Activated T-helper 2 cell treated with anti-CD3 and anti-CD28 coated beads, Interferon-gamma antibody, Interleukin-2, Interleukin-4, amounts not matched to agents 10 μg/mL and 5 μg/mL and 100 μg/mL, durations not matched to agents 14 hours and 24 hours and 36 hours (primary cell): ENCODE measurements at regions of chr4 and their contacts with region 1.

Region 1: GRCh38 chr4:7802093-7802726 is 137.5 kb downstream of the AFAP1 start:
- DNase-seq: peak; percentile 68
- H3K4me3 Mint-ChIP-seq: no peak overlapping the region
- H3K27ac Mint-ChIP-seq: no peak overlapping the region
- H3K4me1 Mint-ChIP-seq: peaks cover 7% of the 10 kb centered on the region
- H3K27me3 Mint-ChIP-seq: no peaks in the 10 kb centered on the region

Region 2: DNA sequence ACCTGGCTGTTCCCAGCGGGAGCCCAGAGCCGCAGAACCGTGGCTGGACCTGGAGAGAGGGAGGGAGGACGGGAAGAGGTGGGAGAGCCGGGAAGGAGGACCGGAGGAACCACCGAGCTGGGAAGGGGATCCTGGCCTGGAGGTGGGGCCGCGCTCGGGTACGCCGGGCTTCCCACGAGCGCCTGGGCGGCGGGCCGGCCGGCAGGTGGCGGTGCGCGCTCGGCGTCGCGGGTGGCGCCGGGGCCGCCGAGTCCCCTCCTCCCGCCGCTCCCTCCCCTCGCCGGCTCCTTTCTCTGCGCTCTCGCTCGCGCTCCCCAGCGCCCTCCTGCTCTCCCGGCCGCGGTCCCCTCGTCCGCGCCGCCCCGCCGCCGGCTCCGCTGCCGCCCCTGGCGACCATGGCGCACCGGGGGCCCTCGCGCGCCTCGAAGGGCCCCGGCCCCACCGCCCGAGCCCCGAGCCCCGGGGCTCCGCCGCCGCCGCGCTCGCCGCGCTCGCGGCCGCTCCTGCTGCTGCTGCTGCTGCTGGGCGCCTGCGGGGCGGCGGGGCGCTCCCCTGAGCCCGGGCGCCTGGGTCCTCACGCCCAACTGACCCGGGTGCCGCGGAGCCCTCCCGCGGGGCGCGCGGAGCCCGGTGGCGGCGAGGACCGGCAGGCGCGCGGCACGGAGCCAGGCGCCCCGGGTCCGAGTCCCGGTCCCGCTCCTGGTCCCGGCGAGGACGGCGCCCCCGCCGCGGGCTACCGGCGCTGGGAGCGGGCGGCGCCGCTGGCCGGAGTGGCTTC is 609.8 kb before region 1 on chr4 and contains the start of gene SORCS2:
- intact Hi-C with region 1: loop called (anchors 5 kb)
- DNase-seq: peak; percentile 29
- H3K4me3 Mint-ChIP-seq: no peak within 1 kb of the TSS
- H3K27ac Mint-ChIP-seq: no peak within 1 kb of the TSS
- H3K4me1 Mint-ChIP-seq: no peaks in the 10 kb centered on the region
- H3K27me3 Mint-ChIP-seq: peaks cover 48% of the 10 kb centered on the region
- total RNA-seq, gene SORCS2: 0.02 and 0.05 TPM in 2 replicates

Region 3: GRCh38 chr4:7761720-7762119 is 40.5 kb before region 1 on chr4:
- intact Hi-C with region 1: loop called (anchors 1 kb)
- DNase-seq: peak; percentile 39
- H3K4me3 Mint-ChIP-seq: no peak overlapping the region
- H3K27ac Mint-ChIP-seq: peak overlapping the region; percentile 22
- H3K4me1 Mint-ChIP-seq: peaks cover 25% of the 10 kb centered on the region
- H3K27me3 Mint-ChIP-seq: no peaks in the 10 kb centered on the region

Region 4: GRCh38 chr4:7843831-7844593 is 41.8 kb after region 1 on chr4:
- intact Hi-C with region 1: loop called (anchors 5 kb)
- DNase-seq: peak; percentile 51
- H3K4me3 Mint-ChIP-seq: no peak overlapping the region
- H3K27ac Mint-ChIP-seq: no peak overlapping the region
- H3K4me1 Mint-ChIP-seq: peaks cover 20% of the 10 kb centered on the region
- H3K27me3 Mint-ChIP-seq: no peaks in the 10 kb centered on the region

Region 5: GRCh38 chr4:7987148-7987989 is 185.2 kb after region 1 on chr4:
- intact Hi-C with region 1: loop called (anchors 1 kb)
- DNase-seq: peak; percentile 62
- H3K4me3 Mint-ChIP-seq: no peak overlapping the region
- H3K27ac Mint-ChIP-seq: no peak overlapping the region
- H3K4me1 Mint-ChIP-seq: peaks cover 6% of the 10 kb centered on the region
- H3K27me3 Mint-ChIP-seq: no peaks in the 10 kb centered on the region